ENCODE measurements at regions of chr10 and their contacts with region 1.

Region 1: GRCh38 chr10:24360282-24361127 is 151.6 kb downstream of the KIAA1217 start:
- DNase-seq: peak; percentile 32
- ATAC-seq: peak; percentile 82; the same call in 1 of the 2 replicates
- H3K4me3 ChIP-seq: no peak overlapping the region
- H3K27ac ChIP-seq: no peak overlapping the region
- H3K4me1 ChIP-seq: no peaks in the 10 kb centered on the region
- H3K27me3 ChIP-seq: no peaks in the 10 kb centered on the region
- CTCF ChIP-seq: peak; percentile 77

Region 2: GRCh38 chr10:23110722-23111516 is 1249.6 kb before region 1 on chr10:
- CTCF ChIA-PET with region 1: no interaction called
- POLR2A ChIA-PET with region 1: no interaction called
- in situ Hi-C with region 1: no loop called
- intact Hi-C with region 1: no loop called
- DNase-seq: no peak
- ATAC-seq: no peak
- H3K4me3 ChIP-seq: no peak overlapping the region
- H3K27ac ChIP-seq: no peak overlapping the region
- H3K4me1 ChIP-seq: no peaks in the 10 kb centered on the region
- H3K27me3 ChIP-seq: no peaks in the 10 kb centered on the region
- CTCF ChIP-seq: no peak

Region 3: GRCh38 chr10:23994479-23995046 is 365.9 kb before region 1 on chr10:
- CTCF ChIA-PET with region 1: interaction called, 9 read pairs
- POLR2A ChIA-PET with region 1: no interaction called
- in situ Hi-C with region 1: no loop called
- intact Hi-C with region 1: loop called (anchors 10 kb)
- DNase-seq: peak; percentile 38
- ATAC-seq: no peak
- H3K4me3 ChIP-seq: no peak overlapping the region
- H3K27ac ChIP-seq: no peak overlapping the region
- H3K4me1 ChIP-seq: no peaks in the 10 kb centered on the region
- H3K27me3 ChIP-seq: no peaks in the 10 kb centered on the region
- CTCF ChIP-seq: peak; percentile 77

Region 4: GRCh38 chr10:24223953-24224352 is 136.6 kb before region 1 on chr10:
- CTCF ChIA-PET with region 1: no interaction called
- POLR2A ChIA-PET with region 1: no interaction called
- in situ Hi-C with region 1: no loop called
- intact Hi-C with region 1: loop called (anchors 10 kb)
- DNase-seq: no peak
- ATAC-seq: no peak
- H3K4me3 ChIP-seq: no peak overlapping the region
- H3K27ac ChIP-seq: no peak overlapping the region
- H3K4me1 ChIP-seq: no peaks in the 10 kb centered on the region
- H3K27me3 ChIP-seq: no peaks in the 10 kb centered on the region
- CTCF ChIP-seq: no peak

Region 5: GRCh38 chr10:24346877-24347519 is 13.5 kb before region 1 on chr10:
- CTCF ChIA-PET with region 1: interaction called, 12 read pairs
- POLR2A ChIA-PET with region 1: no interaction called
- in situ Hi-C with region 1: no loop called
- intact Hi-C with region 1: no loop called
- DNase-seq: no peak
- ATAC-seq: no peak
- H3K4me3 ChIP-seq: no peak overlapping the region
- H3K27ac ChIP-seq: no peak overlapping the region
- H3K4me1 ChIP-seq: peaks cover 4% of the 10 kb centered on the region; the same call in 1 of the 2 replicates
- H3K27me3 ChIP-seq: no peaks in the 10 kb centered on the region
- CTCF ChIP-seq: no peak

Region 6: GRCh38 chr10:24396398-24396797 is 35.9 kb after region 1 on chr10:
- CTCF ChIA-PET with region 1: no interaction called
- POLR2A ChIA-PET with region 1: no interaction called
- in situ Hi-C with region 1: no loop called
- intact Hi-C with region 1: no loop called
- DNase-seq: no peak
- ATAC-seq: no peak
- H3K4me3 ChIP-seq: no peak overlapping the region
- H3K27ac ChIP-seq: no peak overlapping the region
- H3K4me1 ChIP-seq: no peaks in the 10 kb centered on the region
- H3K27me3 ChIP-seq: no peaks in the 10 kb centered on the region
- CTCF ChIP-seq: no peak; the same call in 1 of the 2 replicates